HEK293T (cell line): ENCODE measurements at regions of chr7 and their contacts with region 1.

Region 1: DNA sequence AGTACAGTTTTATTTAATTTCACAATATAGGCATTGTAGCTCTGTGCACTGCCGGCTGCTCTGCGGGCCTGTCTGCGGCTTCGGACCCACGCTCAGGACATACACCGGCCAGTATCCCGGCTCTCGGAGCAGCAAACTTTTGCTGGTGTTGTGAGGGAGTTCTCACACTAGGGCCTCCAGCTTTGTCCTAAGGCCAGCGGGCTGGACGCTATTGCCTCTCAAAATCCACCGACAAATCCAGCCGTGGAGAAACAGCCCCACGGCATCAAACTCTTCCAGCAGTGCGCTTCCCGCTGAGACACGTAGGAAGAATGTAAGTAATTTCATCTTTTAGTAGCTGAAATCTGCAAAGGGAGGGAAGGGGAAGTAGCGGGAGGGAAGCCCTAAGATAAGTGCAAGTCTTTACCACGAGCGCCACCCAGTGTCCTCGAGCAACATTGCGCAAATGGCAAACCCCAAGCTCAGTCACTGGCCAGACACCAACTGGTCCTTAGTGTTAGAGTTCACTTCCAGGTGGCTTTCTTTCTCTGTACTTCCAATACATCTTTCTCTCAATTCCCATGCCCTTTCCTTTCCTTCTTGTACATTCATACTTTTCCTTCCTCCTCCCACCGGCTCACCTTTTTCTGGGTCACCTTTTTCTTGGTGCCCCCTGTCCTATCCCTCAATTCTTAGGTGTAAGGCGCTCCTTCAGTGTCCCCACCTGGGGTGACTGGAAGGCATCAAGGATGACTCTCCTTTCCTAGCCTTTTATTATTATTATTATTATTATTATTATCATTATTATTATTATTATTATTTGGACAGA is 3.0 kb upstream of the DLX5 start:
- DNase-seq: peak; percentile 76

Region 2: DNA sequence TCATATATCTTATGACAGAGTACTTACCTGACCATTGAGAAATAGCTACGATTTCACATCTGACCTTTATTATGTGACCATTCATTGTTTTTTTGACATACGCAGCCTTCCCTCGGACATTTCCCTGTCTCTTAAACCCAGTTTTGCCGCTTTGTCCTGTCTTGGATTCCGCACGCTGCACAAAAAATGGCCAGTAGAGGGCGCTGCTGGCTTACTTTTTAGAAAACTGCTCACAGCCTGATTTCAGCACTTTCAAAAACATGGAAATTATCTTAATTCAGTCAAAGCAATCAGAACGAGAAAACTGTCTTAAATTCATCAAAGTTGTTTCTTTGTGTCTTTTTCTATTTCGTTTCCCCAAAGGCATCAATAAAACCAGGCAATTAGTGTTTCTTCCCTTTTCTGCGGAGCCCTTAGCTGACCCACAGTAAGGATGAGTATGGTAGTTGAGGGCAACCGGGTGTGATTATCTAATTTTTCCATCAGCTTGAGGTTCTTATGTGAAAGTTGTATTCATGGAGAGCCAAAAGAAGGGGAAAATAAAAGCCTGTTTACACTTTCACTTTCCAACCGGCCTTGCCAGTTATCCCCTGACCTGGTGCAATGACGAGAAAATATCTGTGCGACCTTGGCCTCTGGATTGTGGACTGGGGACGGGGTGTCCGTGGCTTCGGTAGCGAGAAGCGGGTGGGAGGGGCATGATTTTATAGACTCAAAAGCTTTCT is 1110.9 kb before region 1 on chr7:
- CTCF ChIA-PET with region 1: interaction called, 15 read pairs
- POLR2A ChIA-PET with region 1: no interaction called
- DNase-seq: peak; percentile 61